ENCODE measurements at regions of chr22 and their contacts with region 1.

Region 1: GRCh38 chr22:46373921-46374662 is 38.6 kb downstream of the TRMU start:
- DNase-seq: no peak

Region 2: GRCh38 chr22:46309526-46310085 is 64.5 kb before region 1 on chr22:
- intact Hi-C with region 1: no loop called
- DNase-seq: no peak

Region 3: DNA sequence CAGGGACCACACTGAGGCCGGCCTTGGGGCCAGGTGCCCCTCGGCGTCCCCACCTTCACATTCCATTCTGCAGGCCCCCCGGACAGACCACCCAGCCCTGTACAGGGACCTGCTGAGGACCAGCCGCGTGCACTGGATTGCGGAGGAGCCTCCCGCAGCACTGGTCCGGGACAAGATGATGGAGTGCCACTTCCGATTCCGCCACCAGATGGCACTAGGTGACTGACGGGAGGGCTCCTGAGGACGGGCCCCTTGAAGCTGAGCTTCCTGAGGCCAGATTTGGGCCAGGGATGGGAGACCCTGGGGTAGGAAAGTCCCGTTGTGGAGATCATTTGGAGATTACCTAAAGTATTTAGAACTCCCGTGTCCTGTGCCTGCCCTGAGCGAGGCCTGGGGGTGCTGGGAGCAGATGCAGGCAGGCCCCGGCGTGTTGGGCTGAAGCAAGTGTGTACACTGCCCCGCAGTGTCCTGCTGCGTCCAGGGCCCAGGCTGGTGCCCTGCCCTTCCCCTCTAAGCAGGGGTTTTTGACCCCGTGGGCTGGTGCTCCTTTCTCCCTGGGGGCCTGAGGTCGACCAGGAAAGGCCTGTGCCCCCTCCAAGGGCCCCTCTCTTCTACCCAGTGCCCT is 18.6 kb before region 1 on chr22:
- intact Hi-C with region 1: no loop called
- DNase-seq: peak; percentile 88

Region 4: DNA sequence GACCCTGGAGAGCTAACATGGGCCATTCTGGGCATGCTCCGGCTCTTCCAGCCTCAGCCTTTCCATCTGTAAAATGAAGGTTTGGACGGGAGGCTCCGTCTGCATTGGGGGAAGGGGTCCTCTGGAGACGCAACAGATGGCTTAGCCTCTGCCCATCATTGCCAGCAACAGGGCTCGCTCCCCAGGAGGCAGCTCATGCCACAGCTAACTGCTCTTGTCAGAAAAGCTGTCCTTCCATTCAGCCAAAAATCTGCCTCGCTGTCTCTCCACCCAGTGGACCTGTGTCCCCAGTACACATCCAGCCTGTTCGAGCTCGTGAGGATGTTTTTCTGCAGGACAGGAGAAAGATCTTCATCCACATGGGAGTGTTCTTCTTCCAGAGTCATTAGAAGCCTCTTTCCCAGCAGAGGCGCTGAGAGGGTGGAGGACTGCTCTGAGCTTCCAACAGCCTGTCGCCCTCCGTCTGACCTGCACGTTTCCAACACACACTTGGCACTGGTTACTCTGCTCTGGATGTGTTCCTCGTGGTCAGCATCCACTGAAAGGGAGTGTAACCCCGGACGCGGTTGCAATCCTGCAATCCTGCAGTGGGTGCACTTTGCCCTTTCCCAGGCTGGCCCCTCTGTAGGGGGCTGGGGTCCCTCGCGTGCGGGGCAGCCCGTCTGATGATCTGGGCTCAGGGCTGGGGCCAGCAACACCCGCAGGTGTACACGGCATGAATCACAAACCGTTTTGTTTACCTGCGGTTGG is 1729.2 kb after region 1 on chr22:
- intact Hi-C with region 1: loop called in 1 of 2 experiments (anchors 5 kb)
- DNase-seq: no peak